Cardiac septum (tissue), 1 donor: ENCODE measurements at regions of chrX and their contacts with region 1.

Region 1: DNA sequence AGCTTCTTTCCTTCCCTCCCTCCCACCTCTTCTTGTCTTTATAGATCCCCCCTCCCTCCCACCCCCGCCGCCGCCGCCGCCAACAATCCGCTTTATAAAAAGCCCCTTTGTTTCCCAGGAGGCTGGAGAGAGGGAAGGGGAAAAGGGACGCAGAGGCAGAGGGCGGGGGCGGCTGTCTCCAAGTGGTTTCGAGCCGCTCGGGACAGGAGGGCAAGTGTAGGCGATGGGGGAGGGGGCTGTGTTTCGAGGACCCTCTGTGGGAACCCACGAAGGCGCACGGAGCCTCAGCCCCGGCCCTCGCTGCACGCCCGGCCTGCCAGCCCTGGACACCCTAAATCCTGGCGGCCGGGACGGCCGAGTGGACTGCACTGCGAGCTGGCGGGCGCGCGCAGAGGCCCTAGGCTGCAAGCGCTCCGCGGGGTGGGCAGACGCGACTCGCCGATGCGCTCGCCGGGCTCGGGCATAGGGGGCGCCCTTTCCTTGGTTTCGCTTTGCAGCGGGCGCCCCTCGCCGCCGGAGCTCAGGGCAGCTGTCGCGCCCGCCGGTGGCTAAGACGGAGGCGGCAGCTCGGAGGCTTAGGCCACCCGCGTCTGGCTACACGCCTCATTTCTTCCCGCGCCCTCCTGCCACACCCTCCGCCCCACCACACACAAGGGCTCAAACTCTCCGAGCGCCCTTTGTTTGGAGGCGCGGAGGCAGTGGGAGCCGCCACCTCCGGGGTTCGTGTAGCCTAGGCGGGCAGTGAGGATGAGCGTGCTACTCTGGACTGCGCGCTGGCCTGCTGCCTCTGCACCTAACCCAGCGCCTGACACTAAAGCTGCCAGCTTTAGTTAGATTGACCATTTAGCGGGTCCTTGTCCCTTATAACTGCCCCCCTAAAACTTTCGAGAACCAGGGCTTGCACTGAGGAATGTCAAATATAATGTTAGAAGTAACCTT is 2.2 kb downstream of the MAMLD1 start:
- DNase-seq: peak; percentile 87

Region 2: GRCh38 chrX:150200820-150201287 is 164.5 kb before region 1 on chrX:
- intact Hi-C with region 1: loop called (anchors 5 kb)
- DNase-seq: no peak

Region 3: GRCh38 chrX:150429594-150429993 is 64.3 kb after region 1 on chrX:
- intact Hi-C with region 1: no loop called
- DNase-seq: no peak

Region 4: GRCh38 chrX:150575416-150575808 is 210.1 kb after region 1 on chrX:
- intact Hi-C with region 1: loop called (anchors 10 kb)
- DNase-seq: no peak